Activated naive CD4-positive, alpha-beta T cell treated with anti-CD3 and anti-CD28 coated beads for 36 hours (primary cell): ENCODE measurements at regions of chr19 and their contacts with region 1.

Region 1: GRCh38 chr19:43446746-43447489 is 18.5 kb downstream of the LYPD3 start:
- DNase-seq: peak; percentile 89
- H3K4me3 Mint-ChIP-seq: no peak overlapping the region
- H3K27ac Mint-ChIP-seq: no peak overlapping the region
- H3K4me1 Mint-ChIP-seq: peaks cover 21% of the 10 kb centered on the region
- H3K27me3 Mint-ChIP-seq: no peaks in the 10 kb centered on the region

Region 2: GRCh38 chr19:42653841-42654240 is 793.1 kb before region 1 on chr19:
- CTCF ChIA-PET with region 1: no interaction called
- intact Hi-C with region 1: no loop called
- DNase-seq: no peak
- H3K4me3 Mint-ChIP-seq: no peak overlapping the region
- H3K27ac Mint-ChIP-seq: no peak overlapping the region
- H3K4me1 Mint-ChIP-seq: no peaks in the 10 kb centered on the region
- H3K27me3 Mint-ChIP-seq: peaks cover 9% of the 10 kb centered on the region

Region 3: GRCh38 chr19:43362179-43362578 is 84.7 kb before region 1 on chr19:
- CTCF ChIA-PET with region 1: no interaction called
- intact Hi-C with region 1: no loop called
- DNase-seq: no peak
- H3K4me3 Mint-ChIP-seq: no peak overlapping the region
- H3K27ac Mint-ChIP-seq: no peak overlapping the region
- H3K4me1 Mint-ChIP-seq: no peaks in the 10 kb centered on the region
- H3K27me3 Mint-ChIP-seq: no peaks in the 10 kb centered on the region

Region 4: GRCh38 chr19:43412431-43412830 is 34.5 kb before region 1 on chr19:
- CTCF ChIA-PET with region 1: no interaction called
- intact Hi-C with region 1: no loop called
- DNase-seq: no peak
- H3K4me3 Mint-ChIP-seq: no peak overlapping the region
- H3K27ac Mint-ChIP-seq: no peak overlapping the region
- H3K4me1 Mint-ChIP-seq: no peaks in the 10 kb centered on the region
- H3K27me3 Mint-ChIP-seq: no peaks in the 10 kb centered on the region

Region 5: DNA sequence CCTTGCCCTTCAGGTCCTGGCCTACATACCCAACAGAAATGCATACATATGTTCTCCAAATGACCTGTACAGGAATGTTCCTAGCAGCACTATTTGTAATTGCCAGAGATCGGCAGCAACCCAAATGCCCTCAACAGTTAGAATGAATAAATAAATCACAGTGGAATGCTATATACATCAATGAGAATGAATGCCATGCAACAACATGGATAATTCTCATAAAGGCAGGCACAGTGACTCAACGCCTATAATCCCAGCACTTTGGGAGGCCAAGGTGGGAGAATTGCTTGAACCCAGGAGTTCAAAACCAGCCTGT is 13.6 kb before region 1 on chr19:
- CTCF ChIA-PET with region 1: interaction called, 12 read pairs
- intact Hi-C with region 1: no loop called
- DNase-seq: no peak
- H3K4me3 Mint-ChIP-seq: no peak overlapping the region
- H3K27ac Mint-ChIP-seq: no peak overlapping the region
- H3K4me1 Mint-ChIP-seq: peaks cover 32% of the 10 kb centered on the region
- H3K27me3 Mint-ChIP-seq: no peaks in the 10 kb centered on the region

Region 6: DNA sequence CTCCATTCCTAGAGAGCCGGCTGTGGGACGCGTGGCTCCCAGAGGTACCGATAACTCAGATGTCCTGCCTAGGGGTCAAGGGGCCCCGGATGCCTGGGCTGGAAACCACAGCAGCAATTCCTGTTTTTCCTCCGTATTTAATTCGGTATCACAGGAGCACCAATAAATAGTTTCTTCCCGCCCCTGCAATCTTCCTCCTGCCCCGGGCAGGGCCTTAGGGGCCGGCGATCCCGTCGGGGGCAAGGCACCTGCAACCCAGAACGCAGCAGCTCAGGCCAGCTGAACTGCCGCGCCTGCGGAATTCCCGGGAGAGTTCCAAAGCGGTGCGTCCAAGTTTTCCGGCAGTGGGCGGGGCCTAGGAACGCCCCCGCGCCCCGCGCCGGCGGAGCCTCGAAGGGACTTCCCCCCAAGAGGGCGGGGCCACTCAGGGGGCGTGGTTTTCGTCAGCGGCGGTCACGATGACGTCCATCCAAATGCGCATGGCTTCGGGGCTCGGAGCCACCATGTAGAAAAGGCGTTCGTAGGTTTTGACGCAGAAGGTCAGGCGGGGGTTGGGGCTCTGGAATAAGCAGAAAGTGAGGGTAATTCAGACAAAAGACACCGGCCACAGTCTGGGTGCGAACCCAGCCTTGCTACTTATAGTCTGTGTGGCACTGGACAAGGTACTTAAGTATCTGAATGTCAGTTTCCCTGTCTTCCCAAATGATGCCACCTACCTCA is 28.2 kb after region 1 on chr19:
- CTCF ChIA-PET with region 1: interaction called, 12 read pairs
- intact Hi-C with region 1: loop called (anchors 1 kb)
- DNase-seq: peak; percentile 97
- H3K4me3 Mint-ChIP-seq: peak overlapping the region; percentile 75
- H3K27ac Mint-ChIP-seq: peak overlapping the region; percentile 86
- H3K4me1 Mint-ChIP-seq: peaks cover 46% of the 10 kb centered on the region
- H3K27me3 Mint-ChIP-seq: no peaks in the 10 kb centered on the region

Region 7: GRCh38 chr19:43519436-43520088 is 72.6 kb after region 1 on chr19:
- CTCF ChIA-PET with region 1: interaction called, 230 read pairs
- intact Hi-C with region 1: loop called (anchors 1 kb)
- DNase-seq: peak; percentile 89
- H3K4me3 Mint-ChIP-seq: no peak overlapping the region
- H3K27ac Mint-ChIP-seq: peak overlapping the region; percentile 48
- H3K4me1 Mint-ChIP-seq: peaks cover 12% of the 10 kb centered on the region
- H3K27me3 Mint-ChIP-seq: no peaks in the 10 kb centered on the region

Region 8: DNA sequence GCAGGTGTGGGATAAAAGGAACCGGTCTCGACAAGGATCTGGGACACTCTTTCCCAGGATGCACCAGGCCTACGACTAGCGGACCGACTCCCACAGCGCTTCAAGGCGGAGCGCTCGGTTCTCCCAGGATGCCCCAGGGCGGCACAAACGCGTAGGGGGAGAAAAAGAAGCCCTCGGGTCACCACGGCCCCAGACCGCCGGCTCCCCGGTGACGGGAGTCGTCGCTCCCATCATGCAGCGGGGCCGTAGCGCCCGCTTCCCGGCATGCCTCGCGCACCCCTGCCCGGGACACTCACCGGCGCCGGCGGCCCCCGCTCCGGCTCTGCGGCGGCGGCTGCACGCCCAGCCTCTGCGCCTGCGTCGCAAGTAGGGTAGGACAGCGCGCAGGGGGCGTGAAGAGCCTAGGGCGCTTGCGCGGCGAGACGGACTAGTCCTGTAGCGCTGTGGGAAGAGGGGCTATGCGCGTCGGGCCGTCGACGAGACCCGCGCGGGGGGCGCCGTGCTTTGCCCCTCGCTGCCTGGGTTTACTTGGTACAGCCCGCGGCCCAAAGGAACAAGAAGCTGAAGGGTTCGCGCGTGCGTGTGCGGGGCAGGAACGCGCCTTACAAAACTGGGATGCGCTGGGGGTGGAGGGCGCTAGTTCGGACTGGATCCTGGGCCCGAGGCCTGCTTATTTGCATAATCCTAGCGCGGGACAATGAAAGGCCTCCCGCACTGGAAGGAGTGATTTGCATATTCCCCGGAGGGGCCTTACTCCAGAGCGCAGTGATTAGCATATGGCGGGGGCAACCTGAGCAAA is 172.5 kb after region 1 on chr19 and contains the start of gene ZNF428:
- CTCF ChIA-PET with region 1: no interaction called
- intact Hi-C with region 1: loop called (anchors 10 kb)
- DNase-seq: peak; percentile 90
- H3K4me3 Mint-ChIP-seq: peak within 1 kb of the TSS; percentile 94
- H3K27ac Mint-ChIP-seq: peak within 1 kb of the TSS; percentile 96
- H3K4me1 Mint-ChIP-seq: peaks cover 19% of the 10 kb centered on the region
- H3K27me3 Mint-ChIP-seq: no peaks in the 10 kb centered on the region
- total RNA-seq, gene ZNF428: 11.4 to 11.8 TPM